ENCODE measurements at regions of chr22 and their contacts with region 1.

Region 1: GRCh38 chr22:23376256-23376655 is 195.9 kb downstream of the BCR start:
- H3K4me3 ChIP-seq: no peak overlapping the region
- H3K27ac ChIP-seq: no peak overlapping the region
- H3K4me1 ChIP-seq: no peaks in the 10 kb centered on the region
- CTCF ChIP-seq: no peak

Region 2: DNA sequence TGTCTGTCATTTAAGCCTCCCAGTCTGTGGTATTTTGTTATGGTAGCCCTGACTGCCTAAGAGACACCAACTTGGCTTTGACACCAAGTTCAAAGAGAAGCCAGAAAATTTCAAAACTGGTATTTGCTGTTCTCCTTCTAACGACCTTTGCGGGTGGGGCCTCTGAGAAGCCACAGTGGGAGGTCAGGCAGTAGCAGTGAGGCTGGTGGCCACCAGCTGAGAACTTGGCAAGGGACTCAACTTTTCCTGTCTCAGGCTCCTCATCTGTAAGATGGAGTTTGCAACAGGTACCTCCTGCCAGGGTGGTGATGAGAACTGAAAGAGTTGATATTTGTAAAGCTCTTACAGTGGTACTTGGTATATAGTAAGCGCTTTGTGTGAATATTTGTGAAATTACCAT is 12.6 kb before region 1 on chr22:
- CTCF ChIA-PET with region 1: interaction called, 19 read pairs
- POLR2A ChIA-PET with region 1: no interaction called
- H3K4me3 ChIP-seq: no peak overlapping the region
- H3K27ac ChIP-seq: no peak overlapping the region
- H3K4me1 ChIP-seq: no peaks in the 10 kb centered on the region
- CTCF ChIP-seq: no peak